Activated CD4-positive, alpha-beta memory T cell treated with anti-CD3 and anti-CD28 coated beads for 36 hours (primary cell): ENCODE measurements at regions of chr17 and their contacts with region 1.

Region 1: DNA sequence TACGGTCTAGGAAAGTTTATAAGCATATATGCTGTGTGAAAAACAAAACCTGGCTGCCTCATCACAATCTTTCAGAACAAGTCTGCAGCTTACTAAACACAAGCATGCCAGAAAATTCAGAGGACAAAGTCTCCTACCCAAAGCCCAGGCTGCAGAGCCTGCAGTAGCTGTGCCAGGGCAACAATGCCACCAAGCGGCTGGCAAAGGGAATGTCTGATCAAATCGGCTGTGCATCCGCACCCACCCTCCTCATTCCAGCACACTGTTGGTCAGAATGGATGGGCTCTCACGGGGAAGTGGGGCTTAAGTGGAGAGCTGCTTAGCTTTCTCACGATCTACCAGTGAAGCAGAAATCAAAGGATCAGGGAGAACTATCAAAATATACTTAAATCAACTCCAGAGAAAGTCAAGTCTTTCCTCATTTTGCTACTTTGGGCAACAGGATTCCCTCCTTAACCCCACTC is 73.5 kb downstream of the CYTH1 start:
- DNase-seq: peak; percentile 76
- H3K4me3 Mint-ChIP-seq: peak overlapping the region; percentile 46
- H3K27ac Mint-ChIP-seq: peak overlapping the region; percentile 80
- H3K4me1 Mint-ChIP-seq: peaks cover 63% of the 10 kb centered on the region
- H3K27me3 Mint-ChIP-seq: no peaks in the 10 kb centered on the region

Region 2: DNA sequence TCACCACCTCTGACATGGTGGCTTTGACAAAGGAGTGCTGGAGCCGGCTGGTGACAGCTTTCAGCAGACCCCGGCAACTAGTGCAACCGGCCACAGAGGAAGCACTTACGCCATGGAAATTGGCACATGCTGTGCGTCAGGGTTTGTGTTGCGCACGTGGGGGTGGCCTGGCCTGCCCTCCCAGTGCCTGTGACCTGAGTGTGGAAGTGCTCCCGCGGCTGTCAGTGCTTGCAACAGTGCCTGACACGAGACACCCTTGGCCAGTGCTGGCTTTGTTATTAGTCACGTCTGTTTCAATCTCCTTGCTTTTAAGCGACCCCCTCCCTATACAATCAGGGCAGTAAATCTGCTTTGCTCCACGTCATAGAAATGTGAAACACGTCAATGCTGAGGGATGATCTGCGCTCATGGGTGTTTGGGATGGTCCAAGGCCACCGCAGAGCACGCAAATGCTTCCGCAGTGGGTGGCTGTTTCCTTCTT is 265.9 kb before region 1 on chr17:
- CTCF ChIA-PET with region 1: interaction called, 6 read pairs
- POLR2A ChIA-PET with region 1: no interaction called
- intact Hi-C with region 1: loop called (anchors 10 kb)
- DNase-seq: peak; percentile 29
- H3K4me3 Mint-ChIP-seq: no peak overlapping the region
- H3K27ac Mint-ChIP-seq: no peak overlapping the region
- H3K4me1 Mint-ChIP-seq: no peaks in the 10 kb centered on the region
- H3K27me3 Mint-ChIP-seq: no peaks in the 10 kb centered on the region

Region 3: GRCh38 chr17:78497115-78497540 is 211.4 kb before region 1 on chr17:
- CTCF ChIA-PET with region 1: interaction called, 9 read pairs
- POLR2A ChIA-PET with region 1: no interaction called
- intact Hi-C with region 1: loop called (anchors 2 kb)
- DNase-seq: peak; percentile 72
- H3K4me3 Mint-ChIP-seq: no peak overlapping the region
- H3K27ac Mint-ChIP-seq: no peak overlapping the region
- H3K4me1 Mint-ChIP-seq: no peaks in the 10 kb centered on the region
- H3K27me3 Mint-ChIP-seq: no peaks in the 10 kb centered on the region

Region 4: GRCh38 chr17:78723001-78723796 is 14.7 kb after region 1 on chr17:
- CTCF ChIA-PET with region 1: interaction called, 24 read pairs
- POLR2A ChIA-PET with region 1: interaction called, 11 read pairs
- intact Hi-C with region 1: loop called (anchors 1 kb)
- DNase-seq: no peak
- H3K4me3 Mint-ChIP-seq: no peak overlapping the region
- H3K27ac Mint-ChIP-seq: peak overlapping the region; percentile 89
- H3K4me1 Mint-ChIP-seq: peaks cover 93% of the 10 kb centered on the region
- H3K27me3 Mint-ChIP-seq: no peaks in the 10 kb centered on the region

Region 5: DNA sequence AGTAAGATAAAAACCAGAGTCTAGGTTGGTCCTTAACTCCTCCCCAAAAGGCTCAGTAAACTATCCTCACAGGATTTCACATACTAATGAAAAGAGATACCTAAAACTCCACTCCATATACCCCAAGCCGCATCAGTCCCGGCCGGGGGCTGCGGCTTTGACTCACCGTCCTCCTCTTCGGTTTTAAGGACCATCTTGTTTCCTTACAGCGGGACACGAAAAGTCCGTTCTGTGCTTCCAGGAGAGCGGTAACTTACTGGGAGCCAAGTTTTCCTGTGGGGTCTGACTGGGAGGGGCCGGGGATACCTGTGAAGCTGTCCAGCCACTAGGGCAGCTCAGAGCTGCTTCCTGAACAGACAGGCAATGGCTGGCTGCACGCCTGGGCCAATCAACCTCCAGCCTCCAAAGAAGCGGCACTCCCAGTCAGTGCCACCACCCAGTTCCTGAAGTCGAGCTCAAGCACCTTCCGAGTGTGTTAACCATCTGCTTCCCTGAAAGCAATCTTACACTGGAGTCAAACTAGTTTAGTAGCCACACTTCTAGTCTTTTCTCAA is 28.1 kb after region 1 on chr17:
- CTCF ChIA-PET with region 1: interaction called, 35 read pairs
- POLR2A ChIA-PET with region 1: interaction called, 4 read pairs
- intact Hi-C with region 1: no loop called
- DNase-seq: peak; percentile 80
- H3K4me3 Mint-ChIP-seq: peak overlapping the region; percentile 82
- H3K27ac Mint-ChIP-seq: peak overlapping the region; percentile 94
- H3K4me1 Mint-ChIP-seq: peaks cover 90% of the 10 kb centered on the region
- H3K27me3 Mint-ChIP-seq: no peaks in the 10 kb centered on the region

Region 6: DNA sequence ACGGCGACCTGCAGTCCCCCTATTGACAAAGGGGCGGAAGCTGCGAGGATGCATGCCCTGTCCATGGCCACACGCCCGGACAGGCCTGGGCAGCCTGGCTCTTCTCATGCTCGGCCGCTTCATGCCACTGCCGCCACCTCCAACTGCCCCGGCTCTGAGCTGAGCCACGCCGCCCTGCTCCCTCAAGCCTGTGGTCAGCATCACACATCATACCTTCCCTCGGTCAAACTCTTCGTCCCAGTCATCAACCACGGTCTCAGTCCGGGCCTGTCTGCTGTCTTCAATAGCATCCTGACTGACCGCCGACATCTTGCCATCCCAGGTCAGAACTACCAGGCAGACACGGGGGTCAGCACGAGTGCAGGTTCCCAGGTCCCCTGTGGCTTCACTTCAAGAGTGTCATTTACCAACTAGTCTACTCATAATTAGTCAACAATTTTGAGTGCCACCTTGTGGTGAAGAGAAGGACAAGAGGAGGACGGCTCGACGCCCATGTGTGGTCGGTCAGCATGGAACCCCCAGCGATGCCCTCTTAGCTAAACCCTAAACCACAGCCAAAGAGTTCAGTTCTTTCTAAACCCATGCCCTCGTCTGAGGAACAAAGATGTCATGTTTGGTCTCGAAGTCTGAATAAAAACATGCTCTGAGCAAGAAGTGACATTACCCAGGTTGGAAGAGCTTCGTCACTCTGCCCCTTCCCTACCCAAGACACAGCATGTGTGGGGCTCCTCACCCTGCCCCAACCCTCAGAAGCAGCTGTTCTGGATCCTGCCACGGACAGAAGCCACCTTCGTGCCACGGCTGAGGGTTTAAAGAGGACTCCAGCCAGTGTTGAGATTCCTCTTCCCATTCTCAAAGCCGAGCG is 90.4 kb after region 1 on chr17:
- CTCF ChIA-PET with region 1: interaction called, 17 read pairs
- POLR2A ChIA-PET with region 1: no interaction called
- intact Hi-C with region 1: no loop called
- DNase-seq: peak; percentile 49
- H3K4me3 Mint-ChIP-seq: no peak overlapping the region
- H3K27ac Mint-ChIP-seq: peak overlapping the region; percentile 86
- H3K4me1 Mint-ChIP-seq: peaks cover 52% of the 10 kb centered on the region
- H3K27me3 Mint-ChIP-seq: no peaks in the 10 kb centered on the region

Region 7: DNA sequence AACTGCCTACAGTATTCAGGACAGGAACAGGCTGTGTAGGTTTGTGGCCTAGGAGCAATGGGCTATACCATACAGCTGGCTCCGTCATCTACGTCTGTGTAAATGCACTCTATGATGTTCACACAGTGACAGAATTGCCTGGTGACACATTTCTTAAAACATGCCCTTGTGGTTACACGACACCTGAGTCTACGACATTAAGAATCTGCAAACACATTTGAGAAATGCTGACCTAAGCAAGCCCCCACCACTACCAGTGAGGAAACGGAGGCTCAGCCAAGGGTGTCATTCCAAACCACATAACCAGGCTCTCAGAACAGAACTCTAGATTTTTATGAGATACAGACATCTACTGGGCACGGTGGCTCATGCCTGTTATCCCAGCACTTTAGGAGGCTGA is 108.6 kb after region 1 on chr17:
- CTCF ChIA-PET with region 1: interaction called, 3 read pairs
- POLR2A ChIA-PET with region 1: no interaction called
- intact Hi-C with region 1: loop called (anchors 2 kb)
- DNase-seq: peak; percentile 89
- H3K4me3 Mint-ChIP-seq: peak overlapping the region; percentile 2
- H3K27ac Mint-ChIP-seq: peak overlapping the region; percentile 92
- H3K4me1 Mint-ChIP-seq: peaks cover 61% of the 10 kb centered on the region
- H3K27me3 Mint-ChIP-seq: no peaks in the 10 kb centered on the region